CD8-positive, alpha-beta memory T cell (primary cell): ENCODE measurements at regions of chr1 and their contacts with region 1.

Region 1: GRCh38 chr1:19582302-19582701 is 61.8 kb upstream of the NBL1 start:
- DNase-seq: peak; percentile 57 to 80 (median 66)
- H3K4me3 ChIP-seq: no peak overlapping the region
- H3K4me3 Mint-ChIP-seq: no peak overlapping the region
- H3K27ac ChIP-seq: no peak overlapping the region
- H3K27ac Mint-ChIP-seq: peak overlapping the region in 5 of 8 donors; percentile 31 to 89 (median 72)
- H3K4me1 ChIP-seq: no peaks in the 10 kb centered on the region
- H3K4me1 Mint-ChIP-seq: peaks cover 5 to 8% (median 7%) of the 10 kb centered on the region in 3 donors
- H3K27me3 ChIP-seq: no peaks in the 10 kb centered on the region
- H3K27me3 Mint-ChIP-seq: peaks cover 0 to 4% of the 10 kb centered on the region in 2 donors

Region 2: GRCh38 chr1:19341201-19342072 is 240.9 kb before region 1 on chr1:
- CTCF ChIA-PET with region 1: interaction called, 23 read pairs
- POLR2A ChIA-PET with region 1: no interaction called
- DNase-seq: peak; percentile 54 to 75 (median 61)
- H3K4me3 ChIP-seq: no peak overlapping the region
- H3K4me3 Mint-ChIP-seq: peak overlapping the region in 1 of 7 donors; percentile 40
- H3K27ac ChIP-seq: no peak overlapping the region
- H3K27ac Mint-ChIP-seq: peak overlapping the region; percentile 47 to 93 (median 73)
- H3K4me1 ChIP-seq: no peaks in the 10 kb centered on the region
- H3K4me1 Mint-ChIP-seq: peaks cover 2 to 19% (median 5%) of the 10 kb centered on the region in 3 donors
- H3K27me3 ChIP-seq: no peaks in the 10 kb centered on the region
- H3K27me3 Mint-ChIP-seq: peaks cover 0 to 1% of the 10 kb centered on the region in 2 donors

Region 3: DNA sequence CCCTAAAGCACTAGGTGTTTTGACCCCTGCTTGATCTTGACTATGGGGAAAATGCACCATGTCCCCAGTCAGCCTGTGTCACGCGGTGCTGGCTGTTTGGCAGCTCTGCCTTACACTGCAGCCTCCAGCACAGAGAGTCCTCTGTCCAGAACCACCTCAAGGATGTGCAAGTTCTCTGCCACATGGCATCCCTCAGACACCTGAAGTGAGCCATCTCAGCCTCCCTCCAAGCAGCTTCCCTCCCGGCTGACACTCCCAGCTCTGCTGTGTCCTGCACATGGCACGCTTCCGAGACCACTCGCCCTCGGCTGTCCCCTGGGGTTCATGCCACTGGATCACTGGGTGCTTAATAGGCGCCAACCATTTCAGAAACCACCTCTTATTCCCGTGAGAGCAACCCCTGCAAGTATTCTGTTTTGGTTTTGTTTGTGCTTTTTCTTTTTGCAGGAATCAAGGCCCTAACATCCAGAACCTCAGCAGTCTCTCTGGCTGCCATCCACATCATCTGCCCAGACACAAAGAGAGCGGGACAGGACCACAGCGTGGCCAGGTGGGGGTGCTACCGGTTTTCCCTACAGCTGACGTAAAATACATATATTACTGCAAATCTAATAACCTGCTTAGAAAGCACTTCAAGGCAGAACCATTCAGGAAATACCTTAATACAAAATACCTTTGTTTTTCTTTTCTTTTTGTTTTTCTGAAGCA is 142.7 kb before region 1 on chr1:
- CTCF ChIA-PET with region 1: interaction called, 18 read pairs
- POLR2A ChIA-PET with region 1: no interaction called
- DNase-seq: peak in 3 of 5 donors; percentile 37 to 63 (median 57)
- H3K4me3 ChIP-seq: no peak overlapping the region
- H3K4me3 Mint-ChIP-seq: peak overlapping the region in 1 of 7 donors; percentile 14
- H3K27ac ChIP-seq: no peak overlapping the region
- H3K27ac Mint-ChIP-seq: peak overlapping the region; percentile 63 to 89 (median 80)
- H3K4me1 ChIP-seq: peaks cover 70% of the 10 kb centered on the region
- H3K4me1 Mint-ChIP-seq: peaks cover 72 to 94% (median 94%) of the 10 kb centered on the region in 3 donors
- H3K27me3 ChIP-seq: no peaks in the 10 kb centered on the region
- H3K27me3 Mint-ChIP-seq: no peaks in the 10 kb centered on the region

Region 4: DNA sequence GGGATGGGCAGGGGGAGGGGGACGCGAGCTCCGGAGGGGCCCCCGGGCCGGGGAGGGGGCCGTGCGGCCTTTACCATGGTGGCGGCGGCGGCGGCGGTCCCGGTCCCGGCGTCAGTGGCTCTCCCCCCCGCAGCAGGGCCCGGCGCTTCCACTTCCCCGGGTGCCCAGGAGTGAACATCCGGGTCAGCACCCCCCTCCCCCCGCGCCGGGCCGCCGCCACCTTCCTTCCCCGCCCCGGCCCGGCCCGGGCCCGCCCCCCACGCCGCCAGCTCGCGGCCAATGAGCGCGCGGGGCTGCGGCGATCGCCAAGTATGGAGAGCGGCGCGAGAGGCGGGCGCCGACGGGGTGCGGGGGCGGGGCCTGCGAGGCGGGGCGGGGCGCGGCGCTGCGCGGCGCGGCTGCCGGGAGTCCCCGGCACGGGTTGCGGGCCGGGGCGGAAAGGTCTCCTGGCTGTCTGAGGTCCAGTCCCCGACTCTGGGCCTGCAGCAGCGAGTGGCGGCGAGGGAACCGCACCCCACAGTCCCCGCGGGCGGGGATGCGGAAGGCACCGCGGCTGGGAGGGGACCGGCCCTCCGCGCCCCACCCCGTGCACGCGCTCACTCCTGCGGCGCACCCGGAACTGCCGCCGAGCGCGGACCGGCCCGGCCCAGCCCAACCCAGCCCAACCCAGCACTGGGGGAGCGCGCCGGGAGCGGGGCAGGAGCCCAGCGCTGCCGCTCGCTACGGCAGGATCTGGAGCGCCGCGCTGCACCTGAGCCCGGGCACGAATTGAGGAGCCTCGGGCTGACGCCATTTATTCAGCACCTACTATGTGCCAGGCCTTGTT is 96.7 kb before region 1 on chr1 and contains the start of gene CAPZB:
- CTCF ChIA-PET with region 1: interaction called, 16 read pairs
- POLR2A ChIA-PET with region 1: interaction called, 3 read pairs
- DNase-seq: peak; percentile 89 to 96 (median 91)
- H3K4me3 ChIP-seq: peak within 1 kb of the TSS; percentile 64
- H3K4me3 Mint-ChIP-seq: peak within 1 kb of the TSS; percentile 92 to 99 (median 94)
- H3K27ac ChIP-seq: peak within 1 kb of the TSS; percentile 88
- H3K27ac Mint-ChIP-seq: peak within 1 kb of the TSS; percentile 93 to 98 (median 96)
- H3K4me1 ChIP-seq: peaks cover 62% of the 10 kb centered on the region
- H3K4me1 Mint-ChIP-seq: peaks cover 58 to 70% (median 69%) of the 10 kb centered on the region in 3 donors
- H3K27me3 ChIP-seq: no peaks in the 10 kb centered on the region
- H3K27me3 Mint-ChIP-seq: peaks cover 0 to 5% of the 10 kb centered on the region in 2 donors
- total RNA-seq, gene CAPZB: 284 to 289 TPM

Region 5: DNA sequence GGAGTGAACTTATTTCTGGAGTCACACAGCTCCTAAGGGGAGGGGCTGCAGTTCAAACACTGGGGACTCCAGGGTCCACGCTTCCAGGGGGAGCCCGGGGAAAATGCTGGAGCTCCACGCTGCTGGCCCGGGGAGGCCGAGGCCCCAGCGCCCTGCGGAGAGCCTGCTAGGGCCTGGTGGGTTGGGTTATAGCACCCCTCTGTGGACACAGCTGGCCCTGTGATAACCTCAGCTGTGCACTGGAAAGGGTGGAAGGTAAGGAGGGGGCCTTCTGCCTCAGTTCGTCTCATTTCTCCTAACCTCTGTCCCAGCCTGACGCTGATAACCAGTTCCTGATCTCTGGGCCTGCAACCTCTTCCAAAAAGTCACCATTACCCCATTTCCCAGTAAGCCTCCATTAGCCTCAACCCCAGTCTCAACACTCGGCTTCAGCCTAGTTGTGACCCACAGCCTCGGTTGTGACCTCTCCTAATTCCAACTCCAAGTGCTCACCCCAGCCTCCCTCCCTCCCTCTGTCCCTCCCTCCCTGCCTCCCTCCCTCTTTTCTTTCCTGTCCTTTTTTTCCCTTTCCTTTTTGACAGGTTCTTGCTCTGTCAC is 68.9 kb after region 1 on chr1:
- CTCF ChIA-PET with region 1: interaction called, 18 read pairs
- POLR2A ChIA-PET with region 1: no interaction called
- DNase-seq: peak in 3 of 5 donors; percentile 28 to 62 (median 45)
- H3K4me3 ChIP-seq: no peak overlapping the region
- H3K4me3 Mint-ChIP-seq: no peak overlapping the region
- H3K27ac ChIP-seq: no peak overlapping the region
- H3K27ac Mint-ChIP-seq: peak overlapping the region in 1 of 8 donors; percentile 8
- H3K4me1 ChIP-seq: peaks cover 12% of the 10 kb centered on the region
- H3K4me1 Mint-ChIP-seq: peaks cover 12 to 35% (median 18%) of the 10 kb centered on the region in 3 donors
- H3K27me3 ChIP-seq: no peaks in the 10 kb centered on the region
- H3K27me3 Mint-ChIP-seq: peaks cover 0 to 4% of the 10 kb centered on the region in 2 donors

Region 6: DNA sequence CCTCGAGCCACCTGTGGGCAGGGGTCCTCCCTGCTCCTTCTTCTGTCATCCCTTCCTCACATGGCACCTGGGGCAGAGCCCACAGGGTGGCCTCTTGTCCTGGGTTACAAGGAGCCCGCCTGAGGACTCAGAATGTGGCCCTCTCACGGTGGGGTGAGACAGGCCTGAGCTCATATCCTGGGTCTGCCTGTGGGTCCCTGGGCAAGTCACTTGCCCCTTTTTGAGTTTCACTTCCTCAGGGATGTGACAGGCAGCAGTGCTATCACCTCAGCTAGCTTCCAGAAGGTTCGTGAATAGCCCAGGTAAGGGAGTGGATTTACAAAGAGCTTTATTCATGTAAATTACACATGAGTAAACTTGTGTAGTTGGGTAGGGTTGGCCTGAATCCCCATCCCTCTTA is 115.9 kb after region 1 on chr1:
- CTCF ChIA-PET with region 1: no interaction called
- POLR2A ChIA-PET with region 1: no interaction called
- DNase-seq: no peak
- H3K4me3 ChIP-seq: no peak overlapping the region
- H3K4me3 Mint-ChIP-seq: no peak overlapping the region
- H3K27ac ChIP-seq: no peak overlapping the region
- H3K27ac Mint-ChIP-seq: peak overlapping the region in 1 of 8 donors; percentile 3
- H3K4me1 ChIP-seq: no peaks in the 10 kb centered on the region
- H3K4me1 Mint-ChIP-seq: no peaks in the 10 kb centered on the region
- H3K27me3 ChIP-seq: no peaks in the 10 kb centered on the region
- H3K27me3 Mint-ChIP-seq: no peaks in the 10 kb centered on the region

Region 7: GRCh38 chr1:19737104-19737825 is 155.0 kb after region 1 on chr1:
- CTCF ChIA-PET with region 1: no interaction called
- POLR2A ChIA-PET with region 1: no interaction called
- DNase-seq: no peak
- H3K4me3 ChIP-seq: no peak overlapping the region
- H3K4me3 Mint-ChIP-seq: no peak overlapping the region
- H3K27ac ChIP-seq: no peak overlapping the region
- H3K27ac Mint-ChIP-seq: peak overlapping the region in 1 of 8 donors; percentile 84
- H3K4me1 ChIP-seq: no peaks in the 10 kb centered on the region
- H3K4me1 Mint-ChIP-seq: no peaks in the 10 kb centered on the region
- H3K27me3 ChIP-seq: no peaks in the 10 kb centered on the region
- H3K27me3 Mint-ChIP-seq: no peaks in the 10 kb centered on the region